Calu3 (cell line): ENCODE measurements at regions of chr1 and their contacts with region 1.

Region 1: GRCh38 chr1:230867903-230868735 is at the start of gene C1orf198:
- DNase-seq: peak; percentile 88
- H3K4me3 Mint-ChIP-seq: peak within 1 kb of the TSS; percentile 86
- H3K27ac Mint-ChIP-seq: peak within 1 kb of the TSS; percentile 97
- H3K4me1 Mint-ChIP-seq: peaks cover 50% of the 10 kb centered on the region
- H3K27me3 Mint-ChIP-seq: no peaks in the 10 kb centered on the region
- CTCF ChIP-seq: no peak
- total RNA-seq, gene C1orf198: 77.2 and 80.4 TPM in 2 replicates

Region 2: GRCh38 chr1:230517786-230518185 is 350.3 kb before region 1 on chr1:
- CTCF ChIA-PET with region 1: no interaction called
- intact Hi-C with region 1: no loop called
- DNase-seq: peak; percentile 26
- H3K4me3 Mint-ChIP-seq: no peak overlapping the region
- H3K27ac Mint-ChIP-seq: no peak overlapping the region
- H3K4me1 Mint-ChIP-seq: peaks cover 18% of the 10 kb centered on the region
- H3K27me3 Mint-ChIP-seq: no peaks in the 10 kb centered on the region
- CTCF ChIP-seq: no peak

Region 3: DNA sequence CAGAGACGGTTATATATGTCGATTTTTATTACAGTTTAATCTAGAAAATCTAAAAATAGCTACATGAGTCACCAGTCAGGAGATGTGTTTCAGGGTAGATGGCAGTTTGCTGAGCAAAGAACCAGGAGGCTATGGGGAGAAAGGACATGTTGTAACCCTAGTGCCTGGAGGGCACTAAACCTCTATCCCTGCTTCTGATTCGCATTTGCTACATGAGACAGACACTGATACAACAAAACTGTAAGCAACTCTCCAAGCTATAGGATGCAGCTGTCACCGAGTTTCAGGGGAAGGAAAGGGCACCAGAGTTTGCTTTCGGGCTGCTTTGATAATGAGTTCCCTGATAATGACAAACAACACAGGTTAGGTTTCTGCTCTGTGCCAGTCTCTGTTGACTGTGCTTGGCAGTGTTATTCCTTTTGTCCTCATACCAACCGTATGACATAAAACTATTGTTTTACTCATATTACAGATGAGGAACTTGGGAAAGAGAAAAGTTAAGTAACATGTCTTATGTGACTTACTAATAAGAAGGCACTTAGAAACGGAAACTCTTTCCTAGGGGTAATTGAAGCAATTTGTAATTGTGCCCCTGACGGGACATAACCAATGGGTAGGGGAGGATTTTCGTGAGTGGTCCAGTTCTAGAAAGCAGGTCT is 42.9 kb before region 1 on chr1:
- CTCF ChIA-PET with region 1: interaction called, 10 read pairs
- intact Hi-C with region 1: loop called (anchors 2 kb)
- DNase-seq: peak; percentile 50
- H3K4me3 Mint-ChIP-seq: peak overlapping the region; percentile 55
- H3K27ac Mint-ChIP-seq: peak overlapping the region; percentile 99
- H3K4me1 Mint-ChIP-seq: peaks cover 52% of the 10 kb centered on the region
- H3K27me3 Mint-ChIP-seq: no peaks in the 10 kb centered on the region
- CTCF ChIP-seq: no peak